ENCODE measurements at regions of chr2 and their contacts with region 1.

Region 1: DNA sequence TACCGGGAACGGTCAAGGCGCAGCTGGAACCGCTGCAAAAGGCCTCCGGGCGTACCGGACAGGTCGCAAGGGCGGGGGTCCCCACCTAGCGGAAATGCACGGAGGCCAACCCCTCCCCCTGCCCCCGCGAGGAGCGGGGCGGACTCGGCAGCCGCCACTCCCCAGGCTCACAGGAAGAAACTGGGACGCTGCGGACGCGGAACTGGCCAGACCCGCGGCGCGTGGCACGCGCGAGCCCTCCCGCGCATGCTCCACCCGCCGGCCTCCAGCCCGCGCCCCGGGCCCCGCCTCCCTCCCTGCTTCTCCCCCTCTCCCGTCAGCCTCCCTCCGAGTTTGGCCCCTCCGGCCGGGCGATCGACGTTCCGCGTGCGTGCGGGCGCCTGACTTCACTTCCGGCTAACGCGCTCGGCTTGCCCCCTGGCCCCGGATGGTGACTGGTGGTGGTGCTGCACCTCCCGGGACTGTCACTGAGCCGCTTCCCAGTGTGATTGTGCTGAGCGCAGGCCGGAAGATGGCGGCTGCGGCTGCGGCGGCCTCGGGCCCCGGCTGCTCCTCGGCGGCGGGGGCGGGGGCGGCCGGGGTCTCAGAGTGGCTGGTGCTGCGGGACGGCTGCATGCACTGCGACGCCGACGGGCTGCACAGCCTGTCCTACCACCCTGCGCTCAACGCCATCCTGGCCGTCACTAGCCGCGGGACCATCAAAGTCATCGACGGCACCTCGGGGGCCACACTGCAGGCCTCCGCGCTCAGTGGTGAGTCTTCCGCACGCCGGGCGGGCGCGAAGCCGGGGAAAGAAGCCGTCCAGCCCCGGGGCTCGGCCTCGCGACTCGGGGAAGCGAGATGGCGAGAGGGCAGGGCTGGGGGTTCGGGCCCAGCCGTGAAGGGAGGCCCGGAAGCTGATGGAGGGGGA is at the start of gene BIRC6:
- DNase-seq: peak; percentile 96
- H3K4me3 ChIP-seq: peak within 1 kb of the TSS; percentile 100
- H3K27ac ChIP-seq: peak within 1 kb of the TSS; percentile 85
- H3K4me1 ChIP-seq: peaks cover 32% of the 10 kb centered on the region
- CTCF ChIP-seq: no peak
- total RNA-seq, gene BIRC6: 81.2 and 117 TPM in 2 replicates

Region 2: DNA sequence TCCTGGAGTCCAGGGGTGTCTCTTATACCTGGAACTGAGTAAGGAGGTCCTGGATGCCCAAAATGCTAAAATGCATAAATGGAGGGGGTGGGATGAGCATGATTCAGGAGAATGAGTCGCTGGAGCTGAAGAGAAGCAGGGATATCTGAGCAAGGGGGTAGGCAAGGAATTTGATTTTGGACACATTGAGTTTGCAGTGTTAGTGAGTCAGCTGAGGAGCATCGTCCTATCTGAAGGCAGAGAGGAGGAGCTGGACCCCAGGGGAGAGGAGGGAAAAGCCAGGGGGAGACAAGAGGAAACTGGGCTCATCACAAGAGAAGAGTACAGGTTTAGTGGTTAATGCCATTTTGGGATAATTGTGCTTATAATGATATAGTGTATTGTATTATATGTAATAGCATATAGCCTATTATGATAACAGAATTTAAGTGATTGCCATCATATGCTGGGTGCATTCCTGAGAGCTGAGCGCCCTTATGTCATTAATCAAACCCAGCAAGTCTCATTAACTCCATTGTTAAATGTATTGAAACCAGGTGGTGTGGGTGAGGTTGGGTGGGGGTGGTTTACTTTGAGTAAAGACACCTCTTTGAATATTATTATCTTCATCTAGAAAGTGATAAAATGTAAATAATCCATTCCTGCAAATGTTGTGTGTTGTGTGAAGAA is 1110.7 kb before region 1 on chr2:
- CTCF ChIA-PET with region 1: no interaction called
- POLR2A ChIA-PET with region 1: interaction called, 10 read pairs
- intact Hi-C with region 1: no loop called
- DNase-seq: no peak
- H3K4me3 ChIP-seq: no peak overlapping the region
- H3K27ac ChIP-seq: no peak overlapping the region
- H3K4me1 ChIP-seq: peaks cover 25% of the 10 kb centered on the region
- CTCF ChIP-seq: no peak

Region 3: GRCh38 chr2:32277674-32278482 is 79.1 kb before region 1 on chr2 and contains the start of gene YIPF4:
- CTCF ChIA-PET with region 1: no interaction called
- POLR2A ChIA-PET with region 1: no interaction called
- intact Hi-C with region 1: loop called (anchors 5 kb)
- DNase-seq: peak; percentile 94
- H3K4me3 ChIP-seq: peak within 1 kb of the TSS; percentile 93
- H3K27ac ChIP-seq: peak within 1 kb of the TSS; percentile 16
- H3K4me1 ChIP-seq: peaks cover 14% of the 10 kb centered on the region
- CTCF ChIP-seq: no peak
- total RNA-seq, gene YIPF4: 5.4 and 8.6 TPM in 2 replicates

Region 4: DNA sequence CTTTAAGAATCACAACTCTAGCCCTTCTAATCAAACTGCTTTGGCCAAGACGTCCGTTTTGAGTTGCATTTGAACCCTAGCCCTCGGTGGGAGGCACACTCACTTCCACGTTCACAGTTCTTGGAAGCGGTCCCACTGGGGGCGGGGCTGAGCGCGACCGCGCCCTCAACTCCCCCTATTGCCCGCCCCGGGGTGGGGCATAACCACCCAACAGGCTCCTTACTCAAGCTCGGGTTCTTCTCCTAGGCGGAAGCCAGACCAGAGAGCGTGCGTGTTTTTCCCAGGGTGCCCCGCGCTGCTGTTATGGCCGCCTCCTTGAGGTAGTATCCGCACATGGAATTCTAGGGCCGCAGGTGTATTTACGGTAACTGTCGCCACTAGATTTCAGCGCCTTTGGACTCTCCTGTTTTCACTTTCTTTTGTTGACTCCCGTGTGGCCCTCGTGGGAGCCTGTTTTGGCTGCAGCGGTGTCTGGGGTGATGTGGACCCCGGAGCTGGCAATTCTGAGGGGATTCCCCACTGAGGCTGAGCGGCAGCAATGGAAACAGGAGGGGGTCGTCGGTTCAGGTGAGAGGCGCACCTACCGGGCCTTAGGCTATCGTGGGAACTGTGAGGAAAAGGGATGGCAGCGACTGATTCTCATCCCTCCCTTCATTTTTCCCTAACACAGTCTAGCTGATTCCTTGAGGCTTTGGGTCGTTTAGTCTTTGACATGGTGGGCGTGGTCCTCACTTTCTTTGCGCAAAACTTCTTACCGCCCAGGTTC is 271.0 kb after region 1 on chr2 and contains the start of gene TTC27:
- CTCF ChIA-PET with region 1: no interaction called
- POLR2A ChIA-PET with region 1: interaction called, 4 read pairs
- intact Hi-C with region 1: loop called (anchors 2 kb)
- DNase-seq: peak; percentile 95
- H3K4me3 ChIP-seq: peak within 1 kb of the TSS; percentile 99
- H3K27ac ChIP-seq: peak within 1 kb of the TSS; percentile 31
- H3K4me1 ChIP-seq: peaks cover 17% of the 10 kb centered on the region
- CTCF ChIP-seq: no peak
- total RNA-seq, gene TTC27: 20.0 and 27.7 TPM in 2 replicates

Measured in OCI-LY7 (cell line).